Heart right ventricle (tissue), 16 donors: ENCODE measurements at regions of chr2 and their contacts with region 1.

Region 1: GRCh38 chr2:97697252-97698235 is 15.8 kb upstream of the ZAP70 start:
- DNase-seq: peak; percentile 91 to 92
- ATAC-seq: peak; percentile 86 to 96 (median 92)
- H3K4me3 ChIP-seq: no peak overlapping the region
- H3K27ac ChIP-seq: no peak overlapping the region
- H3K4me1 ChIP-seq: peaks cover 0 to 7% (median 4%) of the 10 kb centered on the region in 9 donors
- H3K27me3 ChIP-seq: no peaks in the 10 kb centered on the region
- CTCF ChIP-seq: peak; percentile 91 to 98 (median 97)

Region 2: DNA sequence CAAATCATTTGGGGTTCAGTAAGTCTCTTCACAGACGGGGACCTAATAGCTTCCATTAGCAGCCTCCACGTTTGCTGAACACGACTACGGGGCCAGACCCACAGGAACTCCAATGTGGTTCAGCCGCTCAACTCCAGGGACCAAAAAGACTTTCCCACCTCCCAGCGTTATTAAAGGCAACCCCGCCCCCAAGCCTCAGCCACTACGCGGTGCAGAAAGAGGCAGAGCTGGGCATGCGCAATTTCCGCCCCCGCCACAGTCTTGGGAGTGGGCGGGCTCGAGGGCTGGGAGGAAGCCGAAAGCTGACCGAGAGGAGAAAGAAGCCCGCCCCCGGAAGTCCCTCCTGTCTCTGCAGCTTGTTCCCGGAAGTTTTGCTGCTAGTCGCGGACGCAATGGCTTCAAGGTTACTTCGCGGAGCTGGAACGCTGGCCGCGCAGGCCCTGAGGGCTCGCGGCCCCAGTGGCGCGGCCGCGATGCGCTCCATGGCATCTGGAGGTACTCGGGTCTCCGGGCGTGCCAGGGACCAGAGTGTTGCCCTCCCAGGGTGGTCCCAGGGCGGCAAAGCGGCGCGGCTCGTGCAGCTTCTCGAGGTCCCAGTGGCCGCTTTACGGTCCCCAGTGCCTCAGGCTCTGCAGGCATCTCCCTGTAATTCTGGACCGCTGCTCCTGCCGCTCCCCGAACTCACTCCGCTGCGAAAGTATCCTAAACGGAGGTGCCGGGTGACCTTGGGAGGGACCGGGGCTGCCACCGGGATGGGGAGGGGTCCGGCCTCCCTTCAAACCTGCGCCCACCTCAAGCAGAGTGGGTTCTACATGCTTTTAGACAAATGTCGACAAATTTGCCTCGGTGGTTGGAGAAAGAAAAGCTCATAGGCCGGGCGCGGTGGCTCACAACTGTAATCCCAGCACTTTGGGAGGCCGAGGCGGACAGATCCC is 51.6 kb before region 1 on chr2 and contains the start of gene COX5B:
- intact Hi-C with region 1: loop called in 1 of 10 experiments (anchors 10 kb)
- DNase-seq: peak; percentile 99 to 100
- ATAC-seq: peak; percentile 99 to 100 (median 99)
- H3K4me3 ChIP-seq: peak within 1 kb of the TSS; percentile 73 to 98 (median 86)
- H3K27ac ChIP-seq: peak within 1 kb of the TSS; percentile 90 to 99 (median 96)
- H3K4me1 ChIP-seq: peaks cover 7 to 32% (median 25%) of the 10 kb centered on the region in 9 donors
- H3K27me3 ChIP-seq: no peaks in the 10 kb centered on the region
- CTCF ChIP-seq: peak in 1 of 9 donors; percentile 3
- total RNA-seq, gene COX5B: 886 to 1,398 (median 1,288) TPM

Region 3: DNA sequence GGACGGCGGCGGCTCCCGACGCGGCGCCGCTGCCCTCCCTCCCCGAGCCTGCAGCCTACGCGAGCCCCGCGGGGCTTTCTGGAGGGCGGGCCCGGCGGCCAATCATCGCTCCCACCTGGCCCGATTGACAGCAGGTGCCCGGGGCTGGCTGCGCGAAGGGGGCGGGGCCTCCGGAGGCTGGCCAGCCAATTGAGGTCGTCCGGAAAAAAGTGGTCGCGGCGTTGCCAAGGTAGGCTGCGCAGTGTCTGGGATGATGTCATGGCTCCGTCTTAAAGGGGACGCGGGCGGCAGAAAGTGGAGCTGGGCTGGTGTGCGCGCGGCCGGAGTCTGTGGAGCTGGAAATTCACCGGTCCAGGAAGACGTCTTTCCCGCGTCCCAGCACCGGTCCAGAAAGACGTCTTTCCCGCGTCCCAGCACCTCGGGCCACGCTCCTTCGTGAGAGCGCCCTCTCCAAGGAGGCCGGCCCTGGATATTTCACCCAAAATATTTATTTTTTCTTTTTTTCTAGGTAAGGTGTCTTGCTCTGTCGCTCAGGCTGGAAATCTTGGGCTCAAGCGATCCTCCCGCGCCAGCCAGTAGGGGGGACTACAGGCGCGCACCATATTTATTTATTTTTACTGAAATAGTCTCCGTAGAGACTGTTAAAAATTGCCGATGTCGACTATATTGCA is 33.4 kb before region 1 on chr2 and contains the start of gene ACTR1B:
- intact Hi-C with region 1: loop called in 3 of 10 experiments (anchors 1 to 2 kb)
- DNase-seq: peak; percentile 97 to 98
- ATAC-seq: peak; percentile 95 to 97 (median 96)
- H3K4me3 ChIP-seq: peak within 1 kb of the TSS; percentile 56 to 87 (median 68)
- H3K27ac ChIP-seq: peak within 1 kb of the TSS; percentile 84 to 100 (median 96)
- H3K4me1 ChIP-seq: peaks cover 0 to 38% (median 31%) of the 10 kb centered on the region in 9 donors
- H3K27me3 ChIP-seq: no peaks in the 10 kb centered on the region
- CTCF ChIP-seq: peak; percentile 35 to 80 (median 56)
- total RNA-seq, gene ACTR1B: 62.8 to 78.1 (median 71.4) TPM

Region 4: GRCh38 chr2:97740590-97741182 is 43.1 kb after region 1 on chr2:
- intact Hi-C with region 1: loop called in 1 of 10 experiments (anchors 10 kb)
- DNase-seq: peak in 1 of 2 donors; percentile 45
- ATAC-seq: peak in 5 of 8 donors; percentile 16 to 55 (median 33)
- H3K4me3 ChIP-seq: no peak overlapping the region
- H3K27ac ChIP-seq: no peak overlapping the region
- H3K4me1 ChIP-seq: peaks cover 0 to 27% (median 10%) of the 10 kb centered on the region in 9 donors
- H3K27me3 ChIP-seq: no peaks in the 10 kb centered on the region
- CTCF ChIP-seq: peak; percentile 24 to 75 (median 67)

Region 5: DNA sequence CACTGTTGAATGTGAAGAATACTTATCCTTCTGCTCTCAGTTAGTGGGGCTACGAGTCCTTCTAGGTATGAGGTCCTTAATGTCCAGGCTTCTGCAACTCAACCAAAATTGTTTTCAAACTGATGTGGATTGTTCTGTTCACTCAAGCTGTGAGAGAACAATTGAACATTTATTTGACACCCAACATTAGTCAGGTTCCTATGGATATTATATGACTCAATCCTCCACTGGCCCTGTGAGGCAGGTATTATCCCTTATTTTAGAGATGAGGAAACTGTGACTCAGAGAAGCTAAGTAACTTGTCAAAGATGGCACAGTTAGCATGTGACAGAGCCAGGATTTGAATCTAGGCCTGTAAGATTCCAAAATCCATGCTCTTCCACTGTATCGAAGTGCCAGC is 1559.1 kb after region 1 on chr2:
- intact Hi-C with region 1: no loop called
- DNase-seq: no peak
- ATAC-seq: no peak
- H3K4me3 ChIP-seq: no peak overlapping the region
- H3K27ac ChIP-seq: no peak overlapping the region
- H3K4me1 ChIP-seq: no peaks in the 10 kb centered on the region
- H3K27me3 ChIP-seq: no peaks in the 10 kb centered on the region
- CTCF ChIP-seq: no peak